MCF 10A (cell line): ENCODE measurements at regions of chr11 and their contacts with region 1.

Region 1: DNA sequence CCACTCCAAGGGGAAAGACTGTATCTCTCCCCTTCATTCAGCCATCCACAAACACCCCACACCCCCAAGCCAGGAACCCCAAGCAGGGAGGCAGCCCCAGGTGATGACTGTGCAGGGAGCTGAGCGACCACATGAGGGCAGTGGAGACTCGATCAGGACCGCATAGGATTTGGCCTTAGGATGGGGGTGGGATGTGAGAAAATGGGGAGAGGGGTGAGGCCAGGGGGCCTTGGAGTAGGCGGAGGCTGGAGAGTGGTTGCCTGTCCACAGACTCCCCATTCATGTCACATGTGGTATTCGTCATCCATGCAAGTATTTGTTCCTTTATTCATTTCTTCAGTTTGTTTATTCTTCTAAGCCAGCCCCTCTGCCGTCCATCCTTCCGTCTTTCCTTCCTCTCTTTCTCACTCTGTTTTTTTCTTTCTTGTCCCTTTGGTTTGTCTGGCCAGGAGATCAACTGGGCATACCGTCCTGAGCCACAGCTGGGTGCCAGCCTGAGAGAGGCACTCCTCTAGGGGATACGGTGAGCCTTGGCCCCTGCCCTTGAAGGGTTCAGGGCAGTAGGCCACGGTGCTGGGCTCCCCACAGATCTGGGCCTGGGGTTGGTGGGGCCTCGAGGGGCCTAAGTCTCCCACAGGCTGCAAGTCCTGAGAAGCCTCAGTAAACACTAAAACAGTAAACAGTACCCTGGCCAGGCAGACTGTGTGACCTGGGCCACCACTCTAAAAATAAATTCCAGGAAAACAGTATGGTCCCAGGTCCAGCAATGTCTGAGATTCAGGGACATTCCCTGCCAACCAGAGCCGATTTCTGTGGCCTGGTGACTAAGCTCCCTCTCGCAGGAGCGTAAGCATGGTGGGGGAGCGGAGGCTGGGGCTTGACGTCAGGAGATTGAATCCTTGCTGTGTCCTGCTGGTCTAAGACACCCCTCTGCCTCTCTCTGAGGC is 2.5 kb upstream of the RHOD start:
- DNase-seq: peak; percentile 81
- H3K4me3 Mint-ChIP-seq: no peak overlapping the region
- H3K27ac Mint-ChIP-seq: peak overlapping the region; percentile 85
- H3K4me1 Mint-ChIP-seq: peaks cover 20% of the 10 kb centered on the region
- H3K27me3 Mint-ChIP-seq: no peaks in the 10 kb centered on the region
- CTCF ChIP-seq: peak; percentile 88

Region 2: GRCh38 chr11:66891851-66892660 is 162.1 kb before region 1 on chr11:
- CTCF ChIA-PET with region 1: no interaction called
- POLR2A ChIA-PET with region 1: interaction called, 10 read pairs
- intact Hi-C with region 1: no loop called
- DNase-seq: peak; percentile 98
- H3K4me3 Mint-ChIP-seq: peak overlapping the region; percentile 61
- H3K27ac Mint-ChIP-seq: peak overlapping the region; percentile 92
- H3K4me1 Mint-ChIP-seq: peaks cover 23% of the 10 kb centered on the region
- H3K27me3 Mint-ChIP-seq: no peaks in the 10 kb centered on the region
- CTCF ChIP-seq: no peak

Region 3: DNA sequence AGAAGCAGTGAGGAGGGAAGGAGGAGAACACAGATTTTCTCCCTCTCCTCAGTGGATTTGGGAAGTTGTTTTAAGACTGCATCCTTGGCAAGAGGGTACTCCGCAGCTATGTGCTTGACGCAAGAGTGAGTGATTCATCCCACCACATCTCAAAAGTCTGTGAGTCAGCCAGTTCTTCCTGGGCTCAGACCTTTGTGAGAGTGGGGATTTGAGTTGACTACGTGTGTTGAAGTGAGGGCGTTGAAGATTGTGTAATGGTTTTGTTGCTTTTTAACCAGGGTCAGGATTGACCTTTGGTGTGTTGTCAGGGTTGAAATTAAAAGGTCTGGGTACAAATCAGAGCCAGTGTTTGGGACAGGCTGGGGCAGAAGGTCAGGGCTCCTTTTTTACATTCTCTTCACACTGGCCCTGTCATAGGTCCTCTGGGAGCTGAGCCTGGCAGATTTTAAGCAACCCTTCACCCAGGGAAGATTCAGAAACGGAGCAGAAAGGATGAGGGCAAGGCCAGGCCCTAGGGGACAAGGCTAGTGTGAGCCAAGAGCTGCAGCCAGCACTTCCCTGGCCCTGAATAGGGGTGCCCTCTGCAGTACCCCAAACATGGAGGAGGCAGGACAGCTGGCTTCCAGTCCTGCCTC is 83.2 kb before region 1 on chr11:
- CTCF ChIA-PET with region 1: interaction called, 5 read pairs
- POLR2A ChIA-PET with region 1: interaction called, 24 read pairs
- intact Hi-C with region 1: no loop called
- DNase-seq: peak; percentile 100
- H3K4me3 Mint-ChIP-seq: peak overlapping the region; percentile 7
- H3K27ac Mint-ChIP-seq: peak overlapping the region; percentile 87
- H3K4me1 Mint-ChIP-seq: peaks cover 56% of the 10 kb centered on the region
- H3K27me3 Mint-ChIP-seq: no peaks in the 10 kb centered on the region
- CTCF ChIP-seq: no peak

Region 4: GRCh38 chr11:67002921-67003411 is 51.2 kb before region 1 on chr11:
- CTCF ChIA-PET with region 1: no interaction called
- POLR2A ChIA-PET with region 1: no interaction called
- intact Hi-C with region 1: no loop called
- DNase-seq: no peak
- H3K4me3 Mint-ChIP-seq: no peak overlapping the region
- H3K27ac Mint-ChIP-seq: no peak overlapping the region
- H3K4me1 Mint-ChIP-seq: no peaks in the 10 kb centered on the region
- H3K27me3 Mint-ChIP-seq: no peaks in the 10 kb centered on the region
- CTCF ChIP-seq: no peak

Region 5: DNA sequence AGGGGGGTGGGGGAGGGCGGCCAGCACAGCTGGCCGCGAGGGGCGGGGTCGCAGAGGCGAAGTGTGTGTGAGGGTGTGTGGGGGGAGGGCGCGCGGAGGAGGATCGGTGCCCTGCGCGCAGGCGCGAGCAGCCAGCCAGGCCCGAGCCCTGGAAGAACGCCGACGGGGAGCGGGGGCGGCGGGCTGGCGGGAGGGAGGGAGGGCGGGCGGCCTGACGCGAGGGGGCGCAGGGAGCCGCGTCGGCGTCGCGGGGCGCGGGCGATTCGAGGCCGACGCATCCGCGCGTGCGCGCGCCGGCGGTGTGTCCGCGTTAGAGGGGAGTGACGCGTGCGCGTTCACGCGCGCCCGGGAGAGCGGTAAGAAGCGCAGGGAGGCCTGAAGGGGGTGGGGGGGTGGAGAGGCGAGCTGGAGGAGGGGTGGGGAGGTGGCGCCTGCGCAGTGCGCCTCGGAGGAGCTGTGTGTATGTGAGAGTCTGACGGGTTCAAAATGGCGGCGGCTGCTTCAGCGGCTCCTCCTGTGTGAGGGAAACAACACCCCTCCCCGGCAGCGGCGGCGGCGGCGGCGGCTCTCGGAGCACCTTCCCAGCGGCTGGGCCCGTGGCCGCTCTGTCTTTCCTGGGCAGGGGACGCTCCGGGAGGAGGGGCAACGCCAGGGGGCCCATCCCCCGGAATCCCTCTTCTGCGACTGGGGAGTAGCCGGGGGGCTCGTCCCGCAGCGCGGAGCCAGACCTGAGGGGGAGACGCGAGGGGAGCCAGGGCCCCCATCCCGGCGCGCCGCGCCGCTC is 64.8 kb after region 1 on chr11 and contains the start of gene KDM2A:
- CTCF ChIA-PET with region 1: interaction called, 4 read pairs
- POLR2A ChIA-PET with region 1: interaction called, 52 read pairs
- intact Hi-C with region 1: loop called (anchors 2 kb)
- DNase-seq: peak; percentile 97
- H3K4me3 Mint-ChIP-seq: peak within 1 kb of the TSS; percentile 93
- H3K27ac Mint-ChIP-seq: peak within 1 kb of the TSS; percentile 88
- H3K4me1 Mint-ChIP-seq: peaks cover 17% of the 10 kb centered on the region
- H3K27me3 Mint-ChIP-seq: no peaks in the 10 kb centered on the region
- CTCF ChIP-seq: peak; percentile 8
- total RNA-seq, gene KDM2A: 63.8 and 64.5 TPM in 2 replicates

Region 6: GRCh38 chr11:67265633-67266423 is 211.7 kb after region 1 on chr11:
- CTCF ChIA-PET with region 1: interaction called, 3 read pairs
- POLR2A ChIA-PET with region 1: interaction called, 4 read pairs
- intact Hi-C with region 1: loop called (anchors 2 kb)
- DNase-seq: peak; percentile 57
- H3K4me3 Mint-ChIP-seq: peak overlapping the region; percentile 93
- H3K27ac Mint-ChIP-seq: peak overlapping the region; percentile 89
- H3K4me1 Mint-ChIP-seq: peaks cover 33% of the 10 kb centered on the region
- H3K27me3 Mint-ChIP-seq: no peaks in the 10 kb centered on the region
- CTCF ChIP-seq: peak; percentile 57

Region 7: DNA sequence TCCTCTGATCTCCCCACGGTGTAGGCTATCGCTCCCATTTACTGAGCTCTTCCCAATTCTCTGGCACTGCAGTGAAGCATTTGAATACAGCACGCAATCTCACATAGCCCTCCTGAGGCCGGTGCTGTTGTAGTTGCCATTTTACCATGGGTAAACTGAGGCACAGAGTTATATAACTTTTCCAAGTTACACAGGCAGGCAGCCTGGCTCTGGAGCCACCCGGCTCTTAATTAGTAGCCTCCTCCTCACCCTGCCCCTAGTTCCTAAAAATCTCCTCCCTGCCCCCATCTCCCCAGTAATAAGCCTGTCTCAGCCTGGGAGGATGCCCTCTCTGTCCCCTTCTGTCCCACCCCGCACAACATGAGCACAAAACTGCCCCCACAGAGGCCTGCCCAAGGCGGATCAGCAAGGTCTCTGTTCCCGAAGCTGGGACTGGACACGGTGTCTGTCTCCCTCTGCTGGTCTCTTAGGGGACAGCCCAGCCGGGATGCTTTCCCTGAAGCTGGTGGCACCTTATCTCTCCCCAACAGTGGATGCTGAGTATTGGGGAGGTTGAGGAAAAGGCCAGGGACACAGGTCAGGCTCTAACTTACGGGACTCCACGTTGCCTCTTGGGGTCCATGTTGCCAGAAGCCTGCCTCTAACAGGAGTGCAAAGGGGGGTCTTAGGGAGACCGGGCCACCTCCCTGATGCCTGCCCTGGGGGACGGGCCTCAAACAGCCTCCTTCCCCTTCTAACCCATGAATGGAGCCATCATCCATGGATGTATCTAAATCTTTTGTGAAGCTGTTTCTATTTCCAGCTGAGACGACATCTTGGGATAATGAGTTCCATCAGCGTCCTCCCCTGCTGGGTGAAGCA is 328.3 kb after region 1 on chr11:
- CTCF ChIA-PET with region 1: interaction called, 4 read pairs
- POLR2A ChIA-PET with region 1: interaction called, 3 read pairs
- intact Hi-C with region 1: loop called (anchors 2 kb)
- DNase-seq: peak; percentile 83
- H3K4me3 Mint-ChIP-seq: no peak overlapping the region
- H3K27ac Mint-ChIP-seq: peak overlapping the region; percentile 6
- H3K4me1 Mint-ChIP-seq: peaks cover 41% of the 10 kb centered on the region
- H3K27me3 Mint-ChIP-seq: no peaks in the 10 kb centered on the region
- CTCF ChIP-seq: peak; percentile 97